ENCODE measurements at regions of chr6 and their contacts with region 1.

Region 1: GRCh38 chr6:100730001-100730980 is 150.8 kb downstream of the ASCC3 start:
- DNase-seq: no peak
- ATAC-seq: no peak
- H3K4me3 ChIP-seq: no peak overlapping the region
- H3K4me3 Mint-ChIP-seq: no peak overlapping the region
- H3K27ac ChIP-seq: no peak overlapping the region
- H3K27ac Mint-ChIP-seq: no peak overlapping the region
- H3K4me1 ChIP-seq: no peaks in the 10 kb centered on the region
- H3K4me1 Mint-ChIP-seq: peaks cover 2% of the 10 kb centered on the region
- H3K27me3 ChIP-seq: no peaks in the 10 kb centered on the region
- H3K27me3 Mint-ChIP-seq: no peaks in the 10 kb centered on the region
- CTCF ChIP-seq: no peak

Region 2: DNA sequence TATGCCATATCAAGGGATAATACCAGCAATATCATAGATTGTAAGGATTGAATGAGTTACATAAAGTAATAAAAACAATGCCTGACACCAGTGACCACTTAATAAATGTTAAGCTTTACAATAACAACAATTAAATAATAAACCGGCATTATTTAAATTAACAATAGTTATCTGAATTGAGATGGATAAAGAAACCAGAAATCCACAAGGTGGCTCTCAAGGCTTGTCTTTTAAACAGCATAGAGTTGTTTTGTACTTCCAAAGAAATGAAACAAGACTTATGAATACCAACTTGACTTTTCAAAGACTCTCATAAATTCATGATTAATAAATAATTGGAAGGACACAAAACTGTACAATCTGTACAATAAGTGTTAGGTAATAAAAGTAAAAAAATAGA is 52.3 kb before region 1 on chr6:
- CTCF ChIA-PET with region 1: no interaction called
- POLR2A ChIA-PET with region 1: no interaction called
- intact Hi-C with region 1: no loop called
- DNase-seq: no peak
- ATAC-seq: no peak
- H3K4me3 ChIP-seq: no peak overlapping the region
- H3K4me3 Mint-ChIP-seq: no peak overlapping the region
- H3K27ac ChIP-seq: no peak overlapping the region
- H3K27ac Mint-ChIP-seq: no peak overlapping the region
- H3K4me1 ChIP-seq: no peaks in the 10 kb centered on the region
- H3K4me1 Mint-ChIP-seq: no peaks in the 10 kb centered on the region
- H3K27me3 ChIP-seq: no peaks in the 10 kb centered on the region
- H3K27me3 Mint-ChIP-seq: no peaks in the 10 kb centered on the region
- CTCF ChIP-seq: no peak

Region 3: GRCh38 chr6:100751590-100751989 is 21.3 kb after region 1 on chr6:
- CTCF ChIA-PET with region 1: no interaction called
- POLR2A ChIA-PET with region 1: no interaction called
- intact Hi-C with region 1: loop called in 1 of 2 experiments (anchors 2 kb)
- DNase-seq: no peak
- ATAC-seq: no peak
- H3K4me3 ChIP-seq: no peak overlapping the region
- H3K4me3 Mint-ChIP-seq: no peak overlapping the region
- H3K27ac ChIP-seq: no peak overlapping the region
- H3K27ac Mint-ChIP-seq: no peak overlapping the region
- H3K4me1 ChIP-seq: no peaks in the 10 kb centered on the region
- H3K4me1 Mint-ChIP-seq: peaks cover 2% of the 10 kb centered on the region
- H3K27me3 ChIP-seq: no peaks in the 10 kb centered on the region
- H3K27me3 Mint-ChIP-seq: no peaks in the 10 kb centered on the region
- CTCF ChIP-seq: no peak

Region 4: GRCh38 chr6:100785982-100786381 is 55.7 kb after region 1 on chr6:
- CTCF ChIA-PET with region 1: no interaction called
- POLR2A ChIA-PET with region 1: no interaction called
- intact Hi-C with region 1: no loop called
- DNase-seq: no peak
- ATAC-seq: no peak
- H3K4me3 ChIP-seq: no peak overlapping the region
- H3K4me3 Mint-ChIP-seq: no peak overlapping the region
- H3K27ac ChIP-seq: no peak overlapping the region
- H3K27ac Mint-ChIP-seq: no peak overlapping the region
- H3K4me1 ChIP-seq: no peaks in the 10 kb centered on the region
- H3K4me1 Mint-ChIP-seq: peaks cover 2% of the 10 kb centered on the region
- H3K27me3 ChIP-seq: no peaks in the 10 kb centered on the region
- H3K27me3 Mint-ChIP-seq: no peaks in the 10 kb centered on the region
- CTCF ChIP-seq: no peak

Measured in CD8-positive, alpha-beta T cell (primary cell).